PC-3 (cell line): ENCODE measurements at regions of chr16 and their contacts with region 1.

Region 1: DNA sequence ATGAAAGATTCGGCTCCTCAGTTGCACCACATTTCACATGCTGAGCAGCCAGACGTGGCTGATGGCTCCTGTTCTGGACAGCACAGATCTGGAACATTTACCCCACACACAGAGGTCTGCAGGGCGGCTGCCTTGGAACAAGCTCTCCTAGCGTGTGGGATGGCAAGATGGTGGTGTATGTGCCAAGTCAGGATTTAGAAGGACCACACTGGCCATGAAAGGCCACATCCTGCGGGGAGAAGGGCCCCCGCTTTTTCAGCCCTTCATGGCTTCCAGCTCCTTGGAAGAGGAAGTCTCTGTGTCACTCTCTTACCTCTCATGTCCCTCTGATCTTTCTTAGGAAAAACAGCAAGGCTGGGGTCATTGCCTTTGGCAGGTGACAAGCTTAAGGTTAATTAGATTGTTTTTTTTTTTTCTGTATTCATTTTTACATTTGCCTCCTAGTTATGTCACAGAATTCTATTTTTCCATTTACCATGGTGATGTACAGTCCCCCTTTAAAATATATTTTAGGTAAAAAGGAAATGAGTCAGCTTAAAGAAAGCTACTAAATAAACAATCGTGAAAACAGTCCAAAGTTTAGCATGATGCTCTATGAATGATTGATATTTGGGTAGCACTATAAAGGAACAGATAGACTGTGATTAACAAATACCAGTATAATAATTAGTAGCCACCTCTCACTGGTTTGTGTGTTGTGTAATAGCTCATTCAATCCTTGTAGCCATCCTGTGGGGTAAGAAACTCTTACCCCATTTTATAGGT is 396.6 kb downstream of the CPPED1 start:
- DNase-seq: peak; percentile 63
- ATAC-seq: peak; percentile 98
- H3K4me3 ChIP-seq: no peak overlapping the region
- H3K27ac ChIP-seq: peak overlapping the region; percentile 42
- H3K4me1 ChIP-seq: peaks cover 21% of the 10 kb centered on the region
- H3K27me3 ChIP-seq: no peaks in the 10 kb centered on the region
- CTCF ChIP-seq: no peak

Region 2: GRCh38 chr16:12500771-12501170 is 93.7 kb after region 1 on chr16:
- CTCF ChIA-PET with region 1: interaction called, 13 read pairs
- POLR2A ChIA-PET with region 1: no interaction called
- intact Hi-C with region 1: no loop called
- DNase-seq: peak; percentile 38
- ATAC-seq: peak; percentile 77
- H3K4me3 ChIP-seq: no peak overlapping the region
- H3K27ac ChIP-seq: no peak overlapping the region
- H3K4me1 ChIP-seq: peaks cover 7% of the 10 kb centered on the region
- H3K27me3 ChIP-seq: no peaks in the 10 kb centered on the region
- CTCF ChIP-seq: no peak